ENCODE measurements at regions of chr2 and their contacts with region 1.

Region 1: GRCh38 chr2:98608116-98608999 is at the starts of genes COA5 and UNC50:
- DNase-seq: peak; percentile 87
- ATAC-seq: peak; percentile 81
- H3K4me3 ChIP-seq: peak within 1 kb of the TSS; percentile 80
- H3K27ac ChIP-seq: peak within 1 kb of the TSS; percentile 63
- H3K4me1 ChIP-seq: peaks cover 34% of the 10 kb centered on the region
- H3K27me3 ChIP-seq: no peaks in the 10 kb centered on the region
- CTCF ChIP-seq: no peak
- total RNA-seq, gene COA5: 34.0 and 37.2 TPM in 2 replicates
- total RNA-seq, gene UNC50: 18.4 and 26.0 TPM in 2 replicates

Region 2: GRCh38 chr2:98917031-98917471 is 308.7 kb after region 1 on chr2:
- CTCF ChIA-PET with region 1: no interaction called
- POLR2A ChIA-PET with region 1: interaction called, 32 read pairs
- intact Hi-C with region 1: no loop called
- DNase-seq: peak; percentile 84
- ATAC-seq: peak; percentile 49
- H3K4me3 ChIP-seq: no peak overlapping the region
- H3K27ac ChIP-seq: 0 out of 2 replicates have a peak overlapping the region, but pooled peaks have one; percentile 10
- H3K4me1 ChIP-seq: peaks cover 44% of the 10 kb centered on the region
- H3K27me3 ChIP-seq: no peaks in the 10 kb centered on the region
- CTCF ChIP-seq: no peak

Measured in PC-3 (cell line).